Naive thymus-derived CD4-positive, alpha-beta T cell (primary cell): ENCODE measurements at regions of chr1 and their contacts with region 1.

Region 1: GRCh38 chr1:247390116-247390791 is 25.7 kb upstream of the NLRP3 start:
- DNase-seq: peak; percentile 64 to 90 (median 85)
- ATAC-seq: peak; percentile 98
- H3K4me3 ChIP-seq: peak overlapping the region; percentile 16
- H3K4me3 Mint-ChIP-seq: peak overlapping the region; percentile 57 to 89 (median 78)
- H3K27ac ChIP-seq: peak overlapping the region; percentile 38
- H3K27ac Mint-ChIP-seq: peak overlapping the region; percentile 53 to 90 (median 74)
- H3K4me1 ChIP-seq: peaks cover 7% of the 10 kb centered on the region in 2 donors
- H3K4me1 Mint-ChIP-seq: peaks cover 7 to 15% (median 12%) of the 10 kb centered on the region in 7 donors
- H3K27me3 ChIP-seq: no peaks in the 10 kb centered on the region
- H3K27me3 Mint-ChIP-seq: peaks cover 0 to 24% (median 0%) of the 10 kb centered on the region in 5 donors

Region 2: GRCh38 chr1:247373721-247374141 is 16.5 kb before region 1 on chr1:
- CTCF ChIA-PET with region 1: interaction called, 25 read pairs
- POLR2A ChIA-PET with region 1: interaction called, 4 read pairs
- intact Hi-C with region 1: loop called (anchors 1 kb)
- DNase-seq: peak; percentile 37 to 64 (median 48)
- ATAC-seq: peak; percentile 84
- H3K4me3 ChIP-seq: peak overlapping the region; percentile 46
- H3K4me3 Mint-ChIP-seq: peak overlapping the region in 9 of 10 donors; percentile 14 to 70 (median 58)
- H3K27ac ChIP-seq: no peak overlapping the region
- H3K27ac Mint-ChIP-seq: no peak overlapping the region
- H3K4me1 ChIP-seq: no peaks in the 10 kb centered on the region
- H3K4me1 Mint-ChIP-seq: peaks cover 0 to 10% (median 7%) of the 10 kb centered on the region in 7 donors
- H3K27me3 ChIP-seq: no peaks in the 10 kb centered on the region
- H3K27me3 Mint-ChIP-seq: peaks cover 4 to 19% (median 6%) of the 10 kb centered on the region in 5 donors

Region 3: GRCh38 chr1:247407180-247407616 is 16.9 kb after region 1 on chr1:
- CTCF ChIA-PET with region 1: interaction called, 4 read pairs
- POLR2A ChIA-PET with region 1: interaction called, 9 read pairs
- intact Hi-C with region 1: loop called (anchors 1 kb)
- DNase-seq: peak; percentile 40 to 63 (median 53)
- ATAC-seq: peak; percentile 91
- H3K4me3 ChIP-seq: peak overlapping the region; percentile 30
- H3K4me3 Mint-ChIP-seq: peak overlapping the region; percentile 69 to 89 (median 78)
- H3K27ac ChIP-seq: peak overlapping the region; percentile 50
- H3K27ac Mint-ChIP-seq: peak overlapping the region; percentile 76 to 98 (median 92)
- H3K4me1 ChIP-seq: peaks cover 20 to 33% of the 10 kb centered on the region in 2 donors
- H3K4me1 Mint-ChIP-seq: peaks cover 25 to 42% (median 38%) of the 10 kb centered on the region in 7 donors
- H3K27me3 ChIP-seq: no peaks in the 10 kb centered on the region
- H3K27me3 Mint-ChIP-seq: peaks cover 0 to 46% (median 0%) of the 10 kb centered on the region in 5 donors

Region 4: GRCh38 chr1:247415423-247416361 is 25.4 kb after region 1 on chr1 and contains the start of gene NLRP3:
- CTCF ChIA-PET with region 1: interaction called, 34 read pairs
- POLR2A ChIA-PET with region 1: interaction called, 10 read pairs
- intact Hi-C with region 1: loop called (anchors 1 kb)
- DNase-seq: peak; percentile 23 to 63 (median 53)
- ATAC-seq: peak; percentile 86
- H3K4me3 ChIP-seq: peak within 1 kb of the TSS; percentile 53
- H3K4me3 Mint-ChIP-seq: peak within 1 kb of the TSS; percentile 75 to 95 (median 91)
- H3K27ac ChIP-seq: peak within 1 kb of the TSS; percentile 61
- H3K27ac Mint-ChIP-seq: peak within 1 kb of the TSS; percentile 4 to 92 (median 86)
- H3K4me1 ChIP-seq: peaks cover 20 to 33% of the 10 kb centered on the region in 2 donors
- H3K4me1 Mint-ChIP-seq: peaks cover 29 to 63% (median 45%) of the 10 kb centered on the region in 7 donors
- H3K27me3 ChIP-seq: no peaks in the 10 kb centered on the region
- H3K27me3 Mint-ChIP-seq: peaks cover 0 to 46% (median 0%) of the 10 kb centered on the region in 5 donors
- total RNA-seq, gene NLRP3: 0.70 to 90.6 (median 4.6) TPM

Region 5: DNA sequence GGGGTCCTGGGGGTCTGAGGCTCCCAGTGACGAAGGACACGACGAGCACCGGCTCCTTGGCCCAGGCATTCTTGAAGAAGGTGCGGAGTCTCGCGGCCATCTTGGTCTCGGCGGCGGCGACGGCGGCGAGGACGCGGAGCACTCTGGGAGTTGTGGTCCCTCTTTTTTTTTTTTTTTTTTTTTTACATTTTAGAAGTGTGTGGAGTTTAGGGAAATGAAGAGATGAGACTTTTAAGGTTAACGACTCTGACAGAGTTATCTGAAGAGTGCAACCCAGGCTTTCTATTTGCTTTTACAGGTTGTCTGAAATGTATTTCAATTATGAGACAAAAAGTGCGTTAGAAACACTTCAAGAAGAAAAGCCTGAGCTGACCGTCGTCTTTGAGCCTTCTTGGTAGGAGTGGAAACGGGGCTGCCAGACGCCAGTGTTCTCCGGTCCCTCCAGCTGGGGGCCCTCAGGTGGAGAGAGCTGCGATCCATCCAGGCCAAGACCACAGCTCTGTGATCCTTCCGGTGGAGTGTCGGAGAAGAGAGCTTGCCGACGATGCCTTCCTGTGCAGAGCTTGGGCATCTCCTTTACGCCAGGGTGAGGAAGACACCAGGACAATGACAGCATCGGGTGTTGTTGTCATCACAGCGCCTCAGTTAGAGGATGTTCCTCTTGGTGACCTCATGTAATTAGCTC is 58.0 kb after region 1 on chr1:
- CTCF ChIA-PET with region 1: interaction called, 5 read pairs
- POLR2A ChIA-PET with region 1: no interaction called
- intact Hi-C with region 1: loop called in 1 of 2 experiments (anchors 1 kb)
- DNase-seq: peak in 5 of 9 donors; percentile 8 to 29 (median 12)
- ATAC-seq: peak; percentile 12
- H3K4me3 ChIP-seq: no peak overlapping the region
- H3K4me3 Mint-ChIP-seq: peak overlapping the region in 5 of 10 donors; percentile 23 to 68 (median 60)
- H3K27ac ChIP-seq: peak overlapping the region; percentile 50
- H3K27ac Mint-ChIP-seq: peak overlapping the region in 4 of 9 donors; percentile 60 to 72 (median 62)
- H3K4me1 ChIP-seq: no peaks in the 10 kb centered on the region
- H3K4me1 Mint-ChIP-seq: peaks cover 0 to 19% (median 8%) of the 10 kb centered on the region in 7 donors
- H3K27me3 ChIP-seq: no peaks in the 10 kb centered on the region
- H3K27me3 Mint-ChIP-seq: no peaks in the 10 kb centered on the region

Region 6: GRCh38 chr1:247487057-247487456 is 96.8 kb after region 1 on chr1:
- CTCF ChIA-PET with region 1: interaction called, 114 read pairs
- POLR2A ChIA-PET with region 1: interaction called, 8 read pairs
- intact Hi-C with region 1: loop called (anchors 1 kb)
- DNase-seq: peak in 7 of 9 donors; percentile 25 to 63 (median 40)
- ATAC-seq: peak; percentile 83
- H3K4me3 ChIP-seq: no peak overlapping the region
- H3K4me3 Mint-ChIP-seq: no peak overlapping the region
- H3K27ac ChIP-seq: no peak overlapping the region
- H3K27ac Mint-ChIP-seq: no peak overlapping the region
- H3K4me1 ChIP-seq: no peaks in the 10 kb centered on the region
- H3K4me1 Mint-ChIP-seq: no peaks in the 10 kb centered on the region
- H3K27me3 ChIP-seq: no peaks in the 10 kb centered on the region
- H3K27me3 Mint-ChIP-seq: peaks cover 5 to 16% (median 13%) of the 10 kb centered on the region in 5 donors

Region 7: GRCh38 chr1:247576495-247576894 is 186.2 kb after region 1 on chr1:
- CTCF ChIA-PET with region 1: no interaction called
- POLR2A ChIA-PET with region 1: no interaction called
- intact Hi-C with region 1: loop called in 1 of 2 experiments (anchors 1 kb)
- DNase-seq: peak in 2 of 9 donors; percentile 4
- ATAC-seq: no peak
- H3K4me3 ChIP-seq: no peak overlapping the region
- H3K4me3 Mint-ChIP-seq: no peak overlapping the region
- H3K27ac ChIP-seq: no peak overlapping the region
- H3K27ac Mint-ChIP-seq: no peak overlapping the region
- H3K4me1 ChIP-seq: no peaks in the 10 kb centered on the region
- H3K4me1 Mint-ChIP-seq: peaks cover 0 to 2% (median 0%) of the 10 kb centered on the region in 7 donors
- H3K27me3 ChIP-seq: no peaks in the 10 kb centered on the region
- H3K27me3 Mint-ChIP-seq: peaks cover 0 to 25% (median 13%) of the 10 kb centered on the region in 5 donors